ENCODE measurements at regions of chr5 and their contacts with region 1.

Region 1: GRCh38 chr5:66724349-66725139 is 128.4 kb downstream of the MAST4 start:
- DNase-seq: no peak

Region 2: DNA sequence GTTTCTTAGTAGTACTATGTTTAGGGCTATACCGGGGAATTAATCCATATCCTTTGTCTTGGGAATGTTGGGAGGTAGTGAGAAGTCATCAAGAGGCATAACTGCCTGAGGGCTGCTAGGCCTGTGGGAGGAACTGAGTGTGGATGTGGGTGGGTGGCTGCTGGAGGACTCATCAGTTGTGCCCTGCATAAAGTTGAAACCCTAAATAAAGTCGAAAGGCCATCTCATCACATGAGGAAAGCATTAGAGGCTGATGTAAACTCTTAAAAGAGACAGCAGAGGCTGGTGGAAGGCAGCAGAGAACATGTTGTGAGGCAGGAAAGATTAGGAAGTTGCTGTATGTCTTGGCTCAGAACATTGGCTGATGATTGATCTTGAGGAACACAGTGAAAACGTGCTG is 15.4 kb after region 1 on chr5:
- intact Hi-C with region 1: loop called in 1 of 2 experiments (anchors 2 kb)
- DNase-seq: no peak

Region 3: DNA sequence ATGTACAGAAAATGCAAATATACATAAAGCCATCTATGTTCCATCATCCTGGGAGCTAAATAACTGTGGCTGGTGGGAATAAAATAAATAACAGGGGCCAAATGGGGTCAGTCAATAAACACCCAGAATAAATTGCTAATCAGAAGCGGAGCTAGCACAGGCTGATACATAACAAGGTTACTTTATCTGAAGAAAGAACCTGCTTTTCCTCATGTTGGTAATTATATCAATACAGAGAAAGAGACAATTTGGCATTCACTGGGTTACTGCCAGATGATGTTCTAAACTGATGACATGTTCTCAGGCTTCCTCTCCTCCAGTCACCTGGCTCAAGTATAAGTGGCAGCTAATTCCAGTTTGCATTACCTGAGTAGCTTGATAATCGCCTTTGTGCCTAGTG is 616.9 kb after region 1 on chr5:
- intact Hi-C with region 1: loop called in 1 of 2 experiments (anchors 5 kb)
- DNase-seq: no peak

Measured in posterior vena cava (tissue), 2 donors.